PC-9 (cell line): ENCODE measurements at regions of chr1 and their contacts with region 1.

Region 1: DNA sequence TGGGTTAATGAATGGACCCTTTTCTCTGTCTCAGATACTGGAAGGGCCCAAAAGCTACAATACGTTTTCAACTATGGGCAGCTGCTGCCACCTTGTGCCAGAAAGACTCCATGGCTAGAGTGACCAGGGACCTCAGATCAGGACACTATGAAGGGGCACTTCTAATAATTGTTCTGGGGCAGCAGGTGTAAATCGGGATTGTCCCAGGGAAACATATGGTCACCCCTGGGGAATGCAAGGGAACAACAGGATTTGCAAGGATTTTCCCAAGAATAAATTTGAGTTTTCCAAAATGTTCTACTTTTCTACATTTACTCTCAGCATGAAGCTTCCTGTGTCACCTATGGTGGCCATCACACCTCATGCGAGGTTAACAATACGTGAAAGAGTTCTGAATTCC is 12.0 kb upstream of the FCAMR start:
- DNase-seq: peak; percentile 46 to 51
- H3K4me3 ChIP-seq: no peak overlapping the region
- H3K27ac ChIP-seq: no peak overlapping the region
- H3K4me1 ChIP-seq: no peaks in the 10 kb centered on the region
- H3K27me3 ChIP-seq: no peaks in the 10 kb centered on the region
- CTCF ChIP-seq: peak; percentile 85

Region 2: GRCh38 chr1:205636717-205637116 is 1345.5 kb before region 1 on chr1:
- CTCF ChIA-PET with region 1: no interaction called
- POLR2A ChIA-PET with region 1: no interaction called
- intact Hi-C with region 1: no loop called
- DNase-seq: no peak
- H3K4me3 ChIP-seq: no peak overlapping the region
- H3K27ac ChIP-seq: no peak overlapping the region
- H3K4me1 ChIP-seq: peaks cover 12% of the 10 kb centered on the region
- H3K27me3 ChIP-seq: no peaks in the 10 kb centered on the region
- CTCF ChIP-seq: no peak

Region 3: DNA sequence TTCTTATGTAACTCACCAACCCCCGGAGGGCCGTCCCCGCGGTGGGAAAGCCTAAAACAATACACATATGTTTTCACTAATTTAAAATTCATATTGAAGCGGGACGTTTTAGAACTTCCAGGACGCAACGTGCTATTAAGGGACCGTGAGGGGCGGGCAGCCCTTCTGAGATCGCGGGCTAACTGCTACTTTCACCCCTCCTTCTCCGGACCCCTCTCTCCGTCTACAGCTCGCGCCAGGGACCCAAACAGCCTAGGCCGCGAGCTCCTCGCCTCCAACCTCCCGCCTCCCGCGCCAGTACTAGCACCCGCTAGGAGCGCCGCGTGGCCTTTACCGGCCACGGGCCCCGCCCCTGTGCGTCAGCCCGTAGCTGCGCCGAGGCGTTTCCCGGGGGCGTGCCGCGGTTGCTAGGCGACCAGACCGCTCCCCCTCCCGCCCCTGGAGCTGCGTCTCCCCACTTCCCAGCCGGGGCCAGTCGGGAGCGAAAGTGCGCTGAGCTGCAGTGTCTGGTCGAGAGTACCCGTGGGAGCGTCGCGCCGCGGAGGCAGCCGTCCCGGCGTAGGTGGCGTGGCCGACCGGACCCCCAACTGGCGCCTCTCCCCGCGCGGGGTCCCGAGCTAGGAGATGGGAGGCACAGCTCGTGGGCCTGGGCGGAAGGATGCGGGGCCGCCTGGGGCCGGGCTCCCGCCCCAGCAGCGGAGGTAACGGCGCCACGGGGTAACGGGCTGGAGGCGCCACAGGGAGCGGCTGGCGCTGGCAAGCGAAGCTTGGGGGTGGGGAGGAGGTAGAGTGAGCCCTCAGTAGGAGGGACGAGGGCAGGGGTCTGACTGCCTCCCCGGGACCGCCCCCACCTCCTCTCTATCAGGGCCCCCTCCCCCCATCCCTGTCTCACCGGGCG is 346.9 kb before region 1 on chr1 and contains the start of gene DYRK3:
- CTCF ChIA-PET with region 1: no interaction called
- POLR2A ChIA-PET with region 1: no interaction called
- intact Hi-C with region 1: loop called (anchors 2 kb)
- DNase-seq: peak; percentile 64 to 95
- H3K4me3 ChIP-seq: peak within 1 kb of the TSS; percentile 80
- H3K27ac ChIP-seq: no peak within 1 kb of the TSS
- H3K4me1 ChIP-seq: peaks cover 10% of the 10 kb centered on the region
- H3K27me3 ChIP-seq: no peaks in the 10 kb centered on the region
- CTCF ChIP-seq: no peak
- total RNA-seq, gene DYRK3: 3.3 and 3.9 TPM in 2 replicates

Region 4: GRCh38 chr1:206674745-206675175 is 307.5 kb before region 1 on chr1:
- CTCF ChIA-PET with region 1: no interaction called
- POLR2A ChIA-PET with region 1: no interaction called
- intact Hi-C with region 1: no loop called
- DNase-seq: peak; percentile 81 to 95
- H3K4me3 ChIP-seq: no peak overlapping the region
- H3K27ac ChIP-seq: peak overlapping the region; percentile 61
- H3K4me1 ChIP-seq: peaks cover 17% of the 10 kb centered on the region
- H3K27me3 ChIP-seq: no peaks in the 10 kb centered on the region
- CTCF ChIP-seq: no peak

Region 5: GRCh38 chr1:206808615-206809014 is 173.6 kb before region 1 on chr1:
- CTCF ChIA-PET with region 1: interaction called, 4 read pairs
- POLR2A ChIA-PET with region 1: no interaction called
- intact Hi-C with region 1: loop called (anchors 5 kb)
- DNase-seq: no peak
- H3K4me3 ChIP-seq: no peak overlapping the region
- H3K27ac ChIP-seq: no peak overlapping the region
- H3K4me1 ChIP-seq: no peaks in the 10 kb centered on the region
- H3K27me3 ChIP-seq: 0 out of 2 replicates have a peak, but pooled peaks cover 5% of the 10 kb centered on the region
- CTCF ChIP-seq: peak; percentile 37; the same call in 1 of the 2 replicates

Region 6: GRCh38 chr1:206992790-206993189 is 10.6 kb after region 1 on chr1:
- CTCF ChIA-PET with region 1: no interaction called
- POLR2A ChIA-PET with region 1: no interaction called
- intact Hi-C with region 1: no loop called
- DNase-seq: no peak
- H3K4me3 ChIP-seq: no peak overlapping the region
- H3K27ac ChIP-seq: no peak overlapping the region
- H3K4me1 ChIP-seq: no peaks in the 10 kb centered on the region
- H3K27me3 ChIP-seq: no peaks in the 10 kb centered on the region
- CTCF ChIP-seq: no peak

Region 7: DNA sequence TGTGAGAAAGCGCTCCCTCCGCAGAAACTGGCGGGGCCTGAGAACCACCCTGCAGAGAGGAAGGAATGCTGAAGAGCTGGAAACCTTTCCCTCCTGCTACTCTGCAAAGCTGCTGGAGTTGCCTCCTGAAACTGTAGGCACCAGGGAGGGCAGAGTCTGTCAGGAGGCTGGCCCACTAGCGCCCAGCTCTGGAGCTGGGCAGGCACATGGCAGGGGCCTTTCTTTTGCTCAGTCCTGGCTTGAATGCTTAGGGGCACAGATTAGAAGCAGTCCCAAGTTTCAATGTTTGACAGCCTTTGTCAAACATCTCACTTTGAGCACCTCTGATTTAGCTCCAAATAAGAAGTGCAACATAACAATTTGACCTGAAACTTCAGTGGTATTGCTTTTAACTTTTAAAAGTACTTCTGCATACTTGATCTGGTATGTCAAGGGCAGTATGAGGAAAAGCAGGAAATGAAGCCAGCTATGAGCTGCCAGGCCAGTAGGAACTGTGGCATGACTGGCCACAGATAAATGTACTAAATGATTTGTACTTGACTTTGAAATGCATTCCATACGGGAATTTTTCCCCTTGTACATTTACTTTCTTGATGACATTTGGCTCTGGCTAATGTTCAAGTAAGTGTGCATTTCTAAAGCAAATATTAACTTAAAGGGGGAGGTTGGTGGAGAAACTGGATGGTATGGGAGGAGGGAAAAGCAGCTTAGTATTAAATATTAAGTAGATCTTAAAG is 43.1 kb after region 1 on chr1:
- CTCF ChIA-PET with region 1: interaction called, 4 read pairs
- POLR2A ChIA-PET with region 1: no interaction called
- intact Hi-C with region 1: loop called (anchors 1 kb)
- DNase-seq: peak; percentile 80 to 90
- H3K4me3 ChIP-seq: no peak overlapping the region
- H3K27ac ChIP-seq: peak overlapping the region; percentile 97
- H3K4me1 ChIP-seq: peaks cover 90% of the 10 kb centered on the region
- H3K27me3 ChIP-seq: no peaks in the 10 kb centered on the region
- CTCF ChIP-seq: no peak

Region 8: DNA sequence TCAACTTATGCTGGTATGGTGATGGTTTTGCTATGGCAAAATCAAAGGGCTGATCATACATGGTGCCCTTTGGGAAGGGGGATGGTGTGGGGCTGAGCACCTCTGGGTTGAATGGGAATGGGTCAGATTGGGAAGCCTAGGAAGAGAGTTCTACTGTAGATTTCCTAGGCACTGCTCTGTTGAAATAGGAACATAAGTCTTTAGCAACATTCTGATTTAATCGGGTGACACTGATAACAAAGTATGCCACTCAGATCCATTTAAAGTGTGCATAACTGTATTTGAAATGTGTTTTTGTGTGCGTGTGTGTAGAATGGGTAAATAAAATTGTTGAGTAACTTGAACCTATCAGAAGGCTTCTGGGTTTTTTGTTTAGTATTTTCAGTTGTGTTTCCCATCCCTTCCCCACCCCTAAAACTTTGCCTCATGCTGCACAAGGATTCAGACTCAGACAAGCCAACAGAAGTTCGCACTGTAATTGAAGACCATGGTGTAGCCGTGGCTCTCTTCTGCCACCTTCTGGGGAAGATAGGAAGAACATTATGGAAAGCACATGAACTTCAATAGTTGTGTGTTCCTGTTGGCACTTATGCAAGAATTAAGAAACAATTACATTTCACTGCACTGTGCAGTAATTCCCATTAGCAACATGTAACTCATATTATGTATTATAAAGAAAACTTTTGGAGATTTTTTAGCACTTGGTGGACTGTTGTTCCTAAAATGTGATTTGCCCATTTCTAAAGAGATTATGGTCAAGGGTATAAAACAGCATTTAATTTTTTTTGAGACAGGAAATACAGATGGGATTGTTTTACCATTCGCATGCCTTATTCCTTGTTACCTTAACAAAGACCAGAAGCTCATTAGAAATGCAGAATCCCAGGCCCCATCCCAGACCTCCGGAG is 95.5 kb after region 1 on chr1:
- CTCF ChIA-PET with region 1: no interaction called
- POLR2A ChIA-PET with region 1: no interaction called
- intact Hi-C with region 1: loop called (anchors 2 kb)
- DNase-seq: peak; percentile 61 to 67
- H3K4me3 ChIP-seq: no peak overlapping the region
- H3K27ac ChIP-seq: no peak overlapping the region
- H3K4me1 ChIP-seq: no peaks in the 10 kb centered on the region
- H3K27me3 ChIP-seq: no peaks in the 10 kb centered on the region
- CTCF ChIP-seq: peak; percentile 95

Region 9: GRCh38 chr1:207134581-207134980 is 152.4 kb after region 1 on chr1:
- CTCF ChIA-PET with region 1: no interaction called
- POLR2A ChIA-PET with region 1: no interaction called
- intact Hi-C with region 1: no loop called
- DNase-seq: no peak
- H3K4me3 ChIP-seq: no peak overlapping the region
- H3K27ac ChIP-seq: no peak overlapping the region
- H3K4me1 ChIP-seq: no peaks in the 10 kb centered on the region
- H3K27me3 ChIP-seq: no peaks in the 10 kb centered on the region
- CTCF ChIP-seq: no peak